ENCODE measurements at regions of chr7 and their contacts with region 1.

Region 1: GRCh38 chr7:123865517-123866117 is 20.6 kb downstream of the HYAL4 start:
- DNase-seq: peak; percentile 79
- H3K4me3 Mint-ChIP-seq: no peak overlapping the region
- H3K27ac Mint-ChIP-seq: no peak overlapping the region
- H3K4me1 Mint-ChIP-seq: peaks cover 11% of the 10 kb centered on the region
- H3K27me3 Mint-ChIP-seq: no peaks in the 10 kb centered on the region
- CTCF ChIP-seq: peak; percentile 59

Region 2: DNA sequence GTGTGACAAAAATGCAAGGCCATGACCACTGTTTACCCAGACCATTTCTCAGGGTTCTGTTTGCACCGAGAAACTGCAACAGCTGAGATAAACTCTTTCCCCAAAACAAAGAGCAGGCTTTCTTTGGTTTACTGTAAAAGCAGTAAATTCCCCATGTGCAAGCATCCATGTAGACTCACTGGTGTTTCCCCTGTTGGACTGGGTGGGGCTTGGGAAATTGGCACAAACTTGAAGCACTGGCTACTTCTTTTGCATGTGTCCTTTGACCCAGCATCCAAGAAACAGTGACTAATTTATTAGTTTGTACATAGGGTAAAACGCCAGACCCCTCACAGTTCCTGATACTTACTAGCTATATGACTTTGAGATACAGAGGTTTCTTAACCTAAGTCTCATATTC is 343.6 kb before region 1 on chr7:
- CTCF ChIA-PET with region 1: no interaction called
- POLR2A ChIA-PET with region 1: no interaction called
- intact Hi-C with region 1: no loop called
- DNase-seq: peak; percentile 13
- H3K4me3 Mint-ChIP-seq: no peak overlapping the region
- H3K27ac Mint-ChIP-seq: no peak overlapping the region
- H3K4me1 Mint-ChIP-seq: no peaks in the 10 kb centered on the region
- H3K27me3 Mint-ChIP-seq: peaks cover 13% of the 10 kb centered on the region
- CTCF ChIP-seq: no peak

Region 3: DNA sequence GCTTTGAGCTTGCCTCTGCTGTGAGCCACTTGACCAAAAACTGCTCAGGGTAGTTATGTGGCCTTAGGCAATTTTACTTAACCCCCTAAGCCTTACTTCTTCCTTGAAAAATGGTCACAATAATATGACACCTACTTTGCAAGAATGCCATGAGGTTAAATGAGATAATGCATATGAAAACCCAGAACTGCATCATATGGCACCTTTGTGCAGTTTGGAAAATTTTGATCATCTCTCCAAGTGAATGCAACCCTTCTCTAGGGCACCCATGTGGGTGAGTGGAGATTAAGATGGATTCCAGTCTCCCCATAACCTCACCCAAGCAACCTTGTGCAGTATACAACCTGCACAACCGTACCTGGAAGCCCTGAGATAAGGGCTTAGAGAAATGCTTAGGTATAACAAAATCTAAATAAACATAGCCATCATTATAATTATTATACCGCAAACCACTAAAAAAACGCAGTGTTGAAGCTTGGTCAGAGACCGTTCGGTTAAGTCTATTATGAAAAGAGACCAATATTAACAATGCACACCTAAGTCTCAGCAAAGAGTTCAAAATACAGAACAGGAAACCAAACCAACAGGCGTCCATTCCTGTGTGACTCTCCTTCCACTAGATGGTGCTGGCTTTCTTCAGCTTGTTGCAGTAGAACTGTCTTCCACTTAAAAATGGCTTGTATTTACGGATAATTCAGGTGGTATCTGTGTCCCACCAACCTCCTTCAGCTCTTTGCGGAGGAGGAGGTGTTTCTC is 285.0 kb before region 1 on chr7:
- CTCF ChIA-PET with region 1: interaction called, 4 read pairs
- POLR2A ChIA-PET with region 1: no interaction called
- intact Hi-C with region 1: loop called (anchors 2 kb)
- DNase-seq: peak; percentile 68
- H3K4me3 Mint-ChIP-seq: no peak overlapping the region
- H3K27ac Mint-ChIP-seq: no peak overlapping the region
- H3K4me1 Mint-ChIP-seq: no peaks in the 10 kb centered on the region
- H3K27me3 Mint-ChIP-seq: no peaks in the 10 kb centered on the region
- CTCF ChIP-seq: peak; percentile 66

Region 4: DNA sequence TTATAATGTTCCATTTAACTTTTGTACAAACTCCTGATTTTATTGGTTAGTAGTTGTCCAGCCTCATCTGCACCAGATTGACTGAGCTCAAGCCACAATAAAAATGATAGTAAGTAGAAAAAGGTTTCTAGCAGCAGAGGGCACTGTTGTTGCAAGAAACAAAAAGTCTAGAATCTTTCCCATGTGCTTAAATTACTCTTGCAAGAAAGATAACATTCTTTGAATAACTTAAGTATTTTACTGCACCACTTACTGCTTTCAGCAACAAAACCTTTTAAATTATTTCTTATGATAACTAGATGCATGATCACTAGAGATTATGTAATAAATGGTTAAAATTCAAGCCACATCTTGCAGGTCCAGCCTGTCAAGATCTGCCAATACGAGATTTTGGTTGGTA is 182.9 kb before region 1 on chr7:
- CTCF ChIA-PET with region 1: interaction called, 11 read pairs
- POLR2A ChIA-PET with region 1: no interaction called
- intact Hi-C with region 1: loop called (anchors 1 kb)
- DNase-seq: peak; percentile 58
- H3K4me3 Mint-ChIP-seq: no peak overlapping the region
- H3K27ac Mint-ChIP-seq: no peak overlapping the region
- H3K4me1 Mint-ChIP-seq: no peaks in the 10 kb centered on the region
- H3K27me3 Mint-ChIP-seq: no peaks in the 10 kb centered on the region
- CTCF ChIP-seq: peak; percentile 46

Region 5: DNA sequence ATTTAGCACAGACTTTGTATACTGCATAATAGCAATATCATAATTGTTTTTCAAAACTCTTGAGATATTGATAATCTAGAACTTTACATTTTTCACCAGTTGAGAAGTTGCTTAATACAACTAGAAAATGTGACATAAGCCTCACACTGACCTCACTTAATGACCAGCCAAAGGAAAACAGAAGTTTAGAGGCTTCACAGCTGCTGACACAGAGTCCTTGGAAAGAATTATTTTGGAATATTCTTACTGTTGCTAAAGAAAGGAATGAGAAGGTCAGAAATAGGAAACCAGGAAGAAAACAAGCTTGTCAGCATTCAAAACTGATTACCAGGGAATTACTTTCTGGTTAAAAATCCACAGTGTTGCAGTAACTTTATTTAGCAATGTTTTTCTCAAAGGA is 81.4 kb before region 1 on chr7:
- CTCF ChIA-PET with region 1: interaction called, 10 read pairs
- POLR2A ChIA-PET with region 1: no interaction called
- intact Hi-C with region 1: no loop called
- DNase-seq: no peak
- H3K4me3 Mint-ChIP-seq: no peak overlapping the region
- H3K27ac Mint-ChIP-seq: no peak overlapping the region
- H3K4me1 Mint-ChIP-seq: no peaks in the 10 kb centered on the region
- H3K27me3 Mint-ChIP-seq: no peaks in the 10 kb centered on the region
- CTCF ChIP-seq: no peak

Region 6: DNA sequence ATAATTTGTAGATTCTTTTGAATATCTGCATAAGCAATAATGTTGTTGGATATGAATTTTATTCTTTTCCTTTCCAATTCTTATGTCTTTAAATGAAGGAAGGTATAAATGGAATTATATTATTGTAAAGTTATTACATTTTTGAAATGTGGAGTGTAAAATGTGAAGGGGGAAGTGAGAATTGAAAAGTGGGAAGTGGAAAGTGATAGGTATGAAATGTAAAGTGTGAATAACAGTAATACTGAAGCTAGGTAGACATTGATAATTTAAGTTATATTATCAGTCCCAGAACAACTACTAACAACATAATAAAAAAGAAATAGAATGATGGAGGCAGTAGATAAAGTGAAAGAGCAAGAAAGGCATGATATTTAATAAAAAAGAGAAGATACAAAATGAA is 60.3 kb before region 1 on chr7:
- CTCF ChIA-PET with region 1: interaction called, 146 read pairs
- POLR2A ChIA-PET with region 1: interaction called, 58 read pairs
- intact Hi-C with region 1: no loop called
- DNase-seq: no peak
- H3K4me3 Mint-ChIP-seq: no peak overlapping the region
- H3K27ac Mint-ChIP-seq: no peak overlapping the region
- H3K4me1 Mint-ChIP-seq: no peaks in the 10 kb centered on the region
- H3K27me3 Mint-ChIP-seq: no peaks in the 10 kb centered on the region
- CTCF ChIP-seq: no peak

Region 7: GRCh38 chr7:123846216-123846891 is 19.3 kb before region 1 on chr7:
- CTCF ChIA-PET with region 1: interaction called, 11 read pairs
- POLR2A ChIA-PET with region 1: no interaction called
- intact Hi-C with region 1: no loop called
- DNase-seq: peak; percentile 73
- H3K4me3 Mint-ChIP-seq: no peak overlapping the region
- H3K27ac Mint-ChIP-seq: peak overlapping the region; percentile 33
- H3K4me1 Mint-ChIP-seq: peaks cover 14% of the 10 kb centered on the region
- H3K27me3 Mint-ChIP-seq: no peaks in the 10 kb centered on the region
- CTCF ChIP-seq: no peak

Measured in MCF 10A (cell line).